Head of caudate nucleus (tissue), 42 donors: ENCODE measurements at regions of chr9 and their contacts with region 1.

Region 1: GRCh38 chr9:121074635-121075385 is at the start of gene CNTRL:
- DNase-seq: peak; percentile 75 to 95 (median 89)

Region 2: GRCh38 chr9:121121582-121122087 is 46.8 kb after region 1 on chr9:
- intact Hi-C with region 1: loop called (anchors 5 kb)
- DNase-seq: peak; percentile 89 to 99 (median 96)